Natural killer cell (primary cell): ENCODE measurements at regions of chr20 and their contacts with region 1.

Region 1: DNA sequence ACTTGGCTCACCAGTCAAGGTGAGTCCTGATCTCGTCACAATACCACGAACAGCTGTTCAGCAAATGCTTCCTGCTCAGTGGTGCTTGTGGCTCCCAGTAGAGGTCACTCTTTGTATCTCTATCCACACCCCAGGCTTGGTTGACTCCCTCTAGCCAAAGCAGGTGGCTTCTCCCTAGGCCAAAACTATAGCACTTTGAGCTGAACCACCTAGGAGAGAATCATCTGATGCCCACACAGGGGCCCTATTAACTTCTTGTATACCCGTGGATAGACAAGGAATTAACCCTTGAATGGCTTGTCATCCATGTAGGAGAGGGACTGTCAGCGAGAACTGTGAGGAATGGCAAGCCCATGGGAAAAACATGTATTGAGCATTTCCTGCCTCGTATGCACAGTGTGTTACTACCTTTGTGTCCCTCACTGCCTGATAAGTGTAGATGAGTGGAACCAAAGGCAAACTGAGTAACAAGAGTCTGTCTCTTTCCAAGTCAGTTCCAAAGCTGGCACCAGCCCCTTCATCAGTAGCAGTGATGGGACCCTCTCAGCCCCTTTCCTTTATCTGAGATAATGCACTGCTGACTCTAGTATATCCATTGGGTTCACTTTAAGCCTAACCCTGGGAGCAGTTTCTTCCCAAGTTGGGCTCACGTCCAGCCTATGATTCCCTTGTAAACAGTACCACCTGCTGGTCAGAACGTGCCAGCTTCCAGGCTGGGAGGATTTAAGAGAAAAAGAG is 42.5 kb downstream of the EIF2S2 start:
- DNase-seq: peak; percentile 39 to 79
- ATAC-seq: peak; percentile 75 to 84 (median 82)
- H3K4me3 ChIP-seq: no peak overlapping the region
- H3K4me3 Mint-ChIP-seq: no peak overlapping the region
- H3K27ac ChIP-seq: no peak overlapping the region
- H3K27ac Mint-ChIP-seq: peak overlapping the region; percentile 81 to 82
- H3K4me1 ChIP-seq: peaks cover 9% of the 10 kb centered on the region
- H3K4me1 Mint-ChIP-seq: peaks cover 54 to 65% of the 10 kb centered on the region in 2 donors
- H3K27me3 ChIP-seq: no peaks in the 10 kb centered on the region
- H3K27me3 Mint-ChIP-seq: no peaks in the 10 kb centered on the region
- CTCF ChIP-seq: peak; percentile 69

Region 2: DNA sequence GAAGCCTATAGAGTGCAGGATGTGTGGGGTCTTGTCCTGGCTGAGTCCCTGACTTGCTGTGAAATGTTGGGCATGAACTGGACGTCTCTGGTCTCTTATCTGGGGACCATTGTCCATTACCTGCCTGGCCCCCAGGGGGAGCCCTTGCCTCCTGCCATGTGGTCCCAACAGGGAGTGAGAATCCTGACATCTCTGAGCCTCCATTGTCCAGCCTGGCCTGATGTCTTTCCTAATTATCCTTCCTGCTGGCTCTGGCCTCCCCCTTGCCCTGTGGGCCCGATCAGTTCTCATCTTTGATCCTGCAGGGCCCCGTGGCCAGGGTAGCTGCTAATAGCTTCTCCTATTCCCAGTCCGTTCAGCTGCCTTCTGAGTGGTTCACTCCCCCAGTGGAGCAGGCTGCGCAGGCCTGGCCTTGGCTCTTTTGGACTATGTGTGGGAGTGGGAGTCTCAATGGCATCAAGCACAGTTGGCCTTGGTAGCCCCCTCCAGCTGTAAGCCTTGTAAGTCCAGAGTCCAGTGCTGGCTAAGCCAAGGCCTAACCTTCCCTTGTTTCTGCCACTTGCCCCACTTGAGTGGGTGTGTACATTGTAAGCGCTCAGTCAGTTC is 153.7 kb before region 1 on chr20:
- intact Hi-C with region 1: loop called (anchors 1 kb)
- DNase-seq: peak; percentile 57 to 72
- ATAC-seq: peak; percentile 67 to 76 (median 74)
- H3K4me3 ChIP-seq: no peak overlapping the region
- H3K4me3 Mint-ChIP-seq: no peak overlapping the region
- H3K27ac ChIP-seq: no peak overlapping the region
- H3K27ac Mint-ChIP-seq: no peak overlapping the region
- H3K4me1 ChIP-seq: no peaks in the 10 kb centered on the region
- H3K4me1 Mint-ChIP-seq: no peaks in the 10 kb centered on the region
- H3K27me3 ChIP-seq: no peaks in the 10 kb centered on the region
- H3K27me3 Mint-ChIP-seq: peaks cover 7 to 10% of the 10 kb centered on the region in 2 donors
- CTCF ChIP-seq: peak; percentile 78

Region 3: DNA sequence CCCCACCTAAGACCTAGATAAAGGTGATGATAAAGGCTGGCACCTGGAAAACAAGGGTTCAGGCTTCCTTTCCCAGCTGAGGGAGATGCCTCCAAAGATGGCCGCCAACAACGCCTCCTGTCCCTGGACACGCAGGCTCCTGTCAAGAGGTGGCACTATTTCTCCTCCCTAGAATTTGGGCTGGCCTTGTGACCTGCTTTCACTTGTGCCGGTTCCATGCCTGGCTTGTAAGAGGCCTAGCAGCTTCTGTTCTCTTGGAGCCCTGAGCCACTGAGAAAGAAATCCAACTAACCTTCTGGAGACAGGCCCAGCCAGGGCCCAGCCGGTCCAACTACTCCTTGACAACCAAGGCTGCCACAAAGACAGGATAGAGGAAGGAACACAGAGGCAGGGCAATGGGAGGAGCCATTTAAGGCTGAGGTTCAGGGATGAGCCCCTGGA is 136.0 kb before region 1 on chr20:
- intact Hi-C with region 1: loop called (anchors 1 kb)
- DNase-seq: peak; percentile 26 to 75
- ATAC-seq: peak; percentile 70 to 82 (median 72)
- H3K4me3 ChIP-seq: no peak overlapping the region
- H3K4me3 Mint-ChIP-seq: no peak overlapping the region
- H3K27ac ChIP-seq: no peak overlapping the region
- H3K27ac Mint-ChIP-seq: no peak overlapping the region
- H3K4me1 ChIP-seq: no peaks in the 10 kb centered on the region
- H3K4me1 Mint-ChIP-seq: no peaks in the 10 kb centered on the region
- H3K27me3 ChIP-seq: no peaks in the 10 kb centered on the region
- H3K27me3 Mint-ChIP-seq: no peaks in the 10 kb centered on the region
- CTCF ChIP-seq: peak; percentile 19

Region 4: DNA sequence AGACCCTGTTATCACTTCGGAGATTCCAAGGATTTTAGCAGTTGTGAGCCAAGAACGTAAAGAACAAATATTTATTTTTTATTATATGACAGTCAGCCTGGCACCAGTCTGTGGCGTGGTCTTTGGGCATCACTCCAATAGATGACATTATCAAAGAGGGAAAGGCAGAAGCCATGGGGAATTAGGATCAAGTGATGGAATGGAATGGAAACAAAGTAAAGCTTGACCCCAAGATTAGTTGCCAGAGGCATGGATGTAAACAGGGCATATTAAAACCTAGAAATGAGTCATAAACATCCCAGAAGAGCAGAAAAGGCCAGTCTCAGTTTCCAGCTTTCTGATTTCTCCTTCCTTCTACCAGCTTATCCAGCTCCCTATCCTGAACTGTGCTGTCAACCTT is 31.1 kb after region 1 on chr20:
- intact Hi-C with region 1: no loop called
- DNase-seq: no peak
- ATAC-seq: no peak
- H3K4me3 ChIP-seq: no peak overlapping the region
- H3K4me3 Mint-ChIP-seq: no peak overlapping the region
- H3K27ac ChIP-seq: no peak overlapping the region
- H3K27ac Mint-ChIP-seq: peak overlapping the region in 1 of 2 donors; percentile 68
- H3K4me1 ChIP-seq: no peaks in the 10 kb centered on the region
- H3K4me1 Mint-ChIP-seq: peaks cover 23 to 27% of the 10 kb centered on the region in 2 donors
- H3K27me3 ChIP-seq: no peaks in the 10 kb centered on the region
- H3K27me3 Mint-ChIP-seq: no peaks in the 10 kb centered on the region
- CTCF ChIP-seq: no peak

Region 5: DNA sequence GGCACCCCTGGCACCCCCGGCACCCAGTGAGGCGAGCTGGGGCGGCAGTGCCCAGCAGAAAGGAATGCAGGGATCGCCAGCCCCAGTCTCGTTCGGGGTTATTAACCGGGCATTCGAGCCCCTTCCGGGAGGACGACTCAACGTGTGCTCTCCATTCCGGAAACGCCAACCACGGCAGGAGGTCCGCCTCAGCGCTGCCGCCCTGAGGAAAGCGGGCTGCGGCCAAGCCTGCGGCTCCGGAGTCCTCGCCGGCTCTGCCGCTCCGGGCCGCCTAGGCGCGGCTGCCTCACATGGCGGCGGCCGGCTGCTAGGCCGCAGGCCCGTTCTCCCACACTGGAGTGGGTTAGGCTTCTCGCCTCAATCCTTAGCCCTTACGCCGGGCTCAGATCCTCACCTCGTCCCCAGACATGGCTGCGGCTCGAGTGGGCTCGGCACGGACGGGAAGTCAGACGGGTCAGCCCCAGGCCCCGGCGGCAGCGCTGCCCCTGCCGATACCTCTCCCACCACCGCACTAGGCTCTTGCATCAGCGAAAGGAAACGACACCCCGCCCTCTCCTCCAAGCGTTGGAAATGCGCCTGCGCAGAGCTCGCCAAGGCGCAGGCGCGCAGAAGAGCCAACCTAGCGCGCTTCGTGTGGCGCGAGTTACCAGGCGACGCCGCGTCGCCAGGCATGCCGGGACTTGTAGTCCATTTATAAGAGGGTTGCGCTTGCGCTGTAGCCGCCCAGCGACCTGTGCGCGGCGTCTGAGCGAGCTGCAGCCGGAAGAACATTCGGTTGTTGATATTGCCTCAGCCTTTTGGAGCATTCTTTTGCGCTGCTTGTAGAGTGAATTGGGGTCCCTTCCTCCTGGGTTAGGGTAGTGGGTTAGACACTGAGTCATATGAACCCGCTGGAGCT is 42.4 kb after region 1 on chr20 and contains the start of gene EIF2S2:
- intact Hi-C with region 1: loop called (anchors 5 kb)
- DNase-seq: peak; percentile 91 to 100
- ATAC-seq: peak; percentile 85 to 95 (median 88)
- H3K4me3 ChIP-seq: peak within 1 kb of the TSS; percentile 98
- H3K4me3 Mint-ChIP-seq: peak within 1 kb of the TSS; percentile 93
- H3K27ac ChIP-seq: peak within 1 kb of the TSS; percentile 95
- H3K27ac Mint-ChIP-seq: peak within 1 kb of the TSS; percentile 95 to 99
- H3K4me1 ChIP-seq: peaks cover 26% of the 10 kb centered on the region
- H3K4me1 Mint-ChIP-seq: peaks cover 51 to 52% of the 10 kb centered on the region in 2 donors
- H3K27me3 ChIP-seq: no peaks in the 10 kb centered on the region
- H3K27me3 Mint-ChIP-seq: no peaks in the 10 kb centered on the region
- CTCF ChIP-seq: no peak
- total RNA-seq, gene EIF2S2: 17.6 to 20.0 (median 17.6) TPM